ENCODE measurements at regions of chr16 and their contacts with region 1.

Region 1: DNA sequence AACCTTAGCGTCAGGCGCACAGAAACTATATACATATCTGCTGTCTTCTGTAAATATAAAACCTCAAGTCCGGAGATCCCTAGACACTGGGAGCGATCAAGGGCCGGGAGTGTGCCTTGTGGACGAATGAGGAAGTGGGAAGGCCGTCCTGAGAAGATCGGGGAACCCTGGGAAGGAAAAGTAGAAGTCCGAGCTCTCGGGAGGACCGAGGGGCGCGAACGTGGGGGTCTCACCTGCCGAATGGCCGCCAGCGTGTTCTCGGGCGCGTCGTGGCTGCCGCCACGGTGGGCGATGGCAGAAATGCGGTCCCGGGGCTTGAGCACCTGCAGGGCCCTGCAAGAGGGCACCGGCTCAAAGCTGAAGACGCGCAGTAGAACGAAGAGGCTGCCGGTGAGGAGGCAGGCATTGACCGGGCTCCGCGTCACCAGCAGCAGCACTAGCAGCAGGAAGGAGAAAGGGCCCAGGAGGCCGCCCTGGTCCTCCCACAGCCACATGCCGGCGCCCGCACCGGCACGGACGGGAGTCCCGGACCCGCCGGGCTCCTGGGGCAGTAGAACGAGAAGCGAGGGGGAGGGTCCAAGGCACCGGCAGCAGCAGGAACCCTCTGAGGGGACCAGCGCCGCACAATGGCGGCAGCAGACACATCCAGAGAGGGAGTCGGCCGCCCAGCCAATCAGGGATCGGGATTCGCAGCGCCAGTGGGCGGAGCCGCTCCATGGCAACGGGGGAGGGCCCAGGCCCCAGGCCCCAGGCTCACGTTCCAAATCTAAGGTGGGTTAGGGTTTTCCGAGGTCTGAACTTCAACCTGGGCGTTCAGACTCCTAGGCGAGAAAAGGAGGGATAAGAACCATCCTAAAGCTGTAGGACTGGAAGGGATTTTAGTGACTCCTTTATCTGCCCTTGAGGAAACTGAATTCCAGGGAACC is at the start of gene GDE1:
- DNase-seq: peak; percentile 89 to 93
- ATAC-seq: peak; percentile 90
- H3K4me3 ChIP-seq: peak within 1 kb of the TSS; percentile 79 to 96 (median 92)
- H3K27ac ChIP-seq: peak within 1 kb of the TSS; percentile 86 to 94 (median 90)
- H3K4me1 ChIP-seq: peaks cover 28 to 30% of the 10 kb centered on the region in 2 donors
- H3K27me3 ChIP-seq: no peaks in the 10 kb centered on the region
- CTCF ChIP-seq: peak in 2 of 5 experiments; percentile 30 to 38
- POLR2A ChIP-seq: peak; percentile 85 to 92
- total RNA-seq, gene GDE1: 48.8 to 64.1 (median 53.7) TPM

Region 2: GRCh38 chr16:18801197-18801972 is 720.3 kb before region 1 on chr16 and contains the start of gene ARL6IP1:
- in situ Hi-C with region 1: loop called in 1 of 4 experiments (anchors 25 kb)
- intact Hi-C with region 1: loop called (anchors 5 kb)
- DNase-seq: peak; percentile 99 to 100
- ATAC-seq: peak; percentile 93
- H3K4me3 ChIP-seq: peak within 1 kb of the TSS; percentile 91 to 96 (median 94)
- H3K27ac ChIP-seq: peak within 1 kb of the TSS; percentile 90 to 96 (median 94)
- H3K4me1 ChIP-seq: peaks cover 53 to 64% of the 10 kb centered on the region in 2 donors
- H3K27me3 ChIP-seq: no peaks in the 10 kb centered on the region
- CTCF ChIP-seq: peak; percentile 90 to 94 (median 92)
- POLR2A ChIP-seq: peak; percentile 99 to 100
- total RNA-seq, gene ARL6IP1: 25.2 to 40.5 (median 37.5) TPM

Region 3: DNA sequence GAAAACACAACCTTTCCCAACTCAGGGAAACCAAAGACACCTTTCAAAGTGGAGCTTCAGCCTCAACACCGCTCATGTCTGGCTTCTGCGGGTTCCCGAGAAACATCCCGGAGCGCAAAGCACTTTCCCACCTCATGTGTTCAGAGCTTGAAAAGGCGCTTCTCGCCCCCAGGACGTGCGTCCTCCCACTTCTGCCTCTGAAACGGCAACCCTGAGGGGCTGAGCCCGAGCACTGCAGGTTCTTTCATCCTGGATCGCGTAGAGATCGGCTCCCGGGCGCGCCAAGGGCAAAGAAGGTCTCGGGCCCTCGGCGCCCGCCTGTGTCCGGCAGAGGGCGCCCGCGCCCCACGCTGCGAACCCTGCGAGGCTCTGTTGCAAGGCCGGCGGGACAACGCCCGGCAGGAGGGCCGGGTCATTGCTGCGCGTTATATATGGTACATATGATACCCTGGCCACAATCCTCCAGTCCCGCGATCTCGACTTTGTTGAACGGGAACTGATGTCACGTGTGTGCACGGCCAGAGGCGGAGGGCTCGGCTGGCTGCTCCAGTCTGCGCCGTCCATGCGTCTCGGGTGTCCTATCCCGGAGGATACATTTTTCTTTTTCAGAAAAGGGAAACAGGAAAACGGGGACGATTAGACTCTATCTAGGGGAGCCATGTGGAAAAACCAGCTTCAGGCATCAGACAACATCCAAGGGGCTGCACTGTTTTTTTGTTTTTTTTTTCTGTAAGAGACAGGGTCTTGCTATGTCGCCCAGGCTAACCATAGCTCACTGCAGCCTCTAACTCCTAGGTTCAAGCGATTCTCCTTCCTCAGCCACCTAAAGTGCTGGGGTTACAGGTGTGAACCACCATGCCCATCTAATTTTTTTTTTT is 435.2 kb before region 1 on chr16:
- in situ Hi-C with region 1: loop called in 1 of 4 experiments (anchors 10 kb)
- intact Hi-C with region 1: no loop called
- DNase-seq: peak; percentile 39 to 75
- ATAC-seq: peak; percentile 92 to 95
- H3K4me3 ChIP-seq: peak overlapping the region; percentile 32 to 61 (median 46)
- H3K27ac ChIP-seq: peak overlapping the region in 1 of 4 donors; percentile 4
- H3K4me1 ChIP-seq: peaks cover 7 to 8% of the 10 kb centered on the region in 2 donors
- H3K27me3 ChIP-seq: no peaks in the 10 kb centered on the region
- CTCF ChIP-seq: peak; percentile 96 to 100 (median 99)
- POLR2A ChIP-seq: no peak

Region 4: GRCh38 chr16:19555162-19555937 is 33.6 kb after region 1 on chr16 and contains the start of gene VPS35L:
- in situ Hi-C with region 1: no loop called
- intact Hi-C with region 1: loop called (anchors 1 kb)
- DNase-seq: peak; percentile 93 to 98
- ATAC-seq: peak; percentile 95 to 98
- H3K4me3 ChIP-seq: peak within 1 kb of the TSS; percentile 59 to 95 (median 64)
- H3K27ac ChIP-seq: peak within 1 kb of the TSS; percentile 91 to 95 (median 92)
- H3K4me1 ChIP-seq: peaks cover 8 to 17% of the 10 kb centered on the region in 2 donors
- H3K27me3 ChIP-seq: no peaks in the 10 kb centered on the region
- CTCF ChIP-seq: peak; percentile 81 to 86 (median 82)
- POLR2A ChIP-seq: peak; percentile 48 to 49
- total RNA-seq, gene VPS35L: 16.9 to 29.1 (median 24.8) TPM

Region 5: GRCh38 chr16:19578378-19578971 is 56.7 kb after region 1 on chr16:
- in situ Hi-C with region 1: no loop called
- intact Hi-C with region 1: no loop called
- DNase-seq: no peak
- ATAC-seq: no peak
- H3K4me3 ChIP-seq: no peak overlapping the region
- H3K27ac ChIP-seq: no peak overlapping the region
- H3K4me1 ChIP-seq: no peaks in the 10 kb centered on the region
- H3K27me3 ChIP-seq: no peaks in the 10 kb centered on the region
- CTCF ChIP-seq: no peak
- POLR2A ChIP-seq: no peak

Measured in gastrocnemius medialis (tissue), 4 donors.